ENCODE measurements at regions of chr7 and their contacts with region 1.

Region 1: GRCh38 chr7:98745722-98746318 is 124.0 kb downstream of the TMEM130 start:
- DNase-seq: peak; percentile 81

Region 2: GRCh38 chr7:98434095-98434494 is 311.7 kb before region 1 on chr7:
- CTCF ChIA-PET with region 1: interaction called, 11 read pairs
- POLR2A ChIA-PET with region 1: no interaction called
- DNase-seq: no peak

Region 3: DNA sequence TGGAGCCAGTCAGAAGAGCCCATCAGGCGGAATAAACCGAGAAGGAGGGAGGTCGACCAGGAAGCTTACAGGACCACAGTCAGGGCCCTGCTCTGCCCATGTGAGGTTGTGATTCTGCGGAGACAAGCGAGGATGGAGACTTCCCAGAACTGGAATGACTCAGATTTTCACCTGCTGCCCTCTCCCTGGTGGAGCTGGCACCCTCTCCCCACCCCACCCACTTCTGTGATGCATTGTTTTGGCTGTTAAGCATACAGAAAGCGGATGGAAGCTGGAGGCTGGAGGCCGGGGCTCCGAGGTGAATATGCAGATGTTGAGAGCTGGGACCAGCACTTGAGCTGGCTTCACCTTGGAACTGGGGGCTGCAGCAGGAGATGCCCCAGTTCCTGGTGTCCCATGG is 71.4 kb before region 1 on chr7:
- CTCF ChIA-PET with region 1: no interaction called
- POLR2A ChIA-PET with region 1: no interaction called
- DNase-seq: no peak

Region 4: GRCh38 chr7:98735801-98736200 is 10.0 kb before region 1 on chr7:
- CTCF ChIA-PET with region 1: interaction called, 10 read pairs
- POLR2A ChIA-PET with region 1: no interaction called
- DNase-seq: no peak

Region 5: GRCh38 chr7:98841179-98841997 is 95.6 kb after region 1 on chr7:
- CTCF ChIA-PET with region 1: interaction called, 17 read pairs
- POLR2A ChIA-PET with region 1: no interaction called
- DNase-seq: peak; percentile 66

Region 6: GRCh38 chr7:98884416-98884815 is 138.6 kb after region 1 on chr7:
- CTCF ChIA-PET with region 1: no interaction called
- POLR2A ChIA-PET with region 1: no interaction called
- DNase-seq: no peak